ENCODE measurements at regions of chr11 and their contacts with region 1.

Region 1: GRCh38 chr11:11848891-11849746 is 7.3 kb downstream of the USP47 start:
- DNase-seq: peak; percentile 67
- ATAC-seq: peak; percentile 82

Region 2: DNA sequence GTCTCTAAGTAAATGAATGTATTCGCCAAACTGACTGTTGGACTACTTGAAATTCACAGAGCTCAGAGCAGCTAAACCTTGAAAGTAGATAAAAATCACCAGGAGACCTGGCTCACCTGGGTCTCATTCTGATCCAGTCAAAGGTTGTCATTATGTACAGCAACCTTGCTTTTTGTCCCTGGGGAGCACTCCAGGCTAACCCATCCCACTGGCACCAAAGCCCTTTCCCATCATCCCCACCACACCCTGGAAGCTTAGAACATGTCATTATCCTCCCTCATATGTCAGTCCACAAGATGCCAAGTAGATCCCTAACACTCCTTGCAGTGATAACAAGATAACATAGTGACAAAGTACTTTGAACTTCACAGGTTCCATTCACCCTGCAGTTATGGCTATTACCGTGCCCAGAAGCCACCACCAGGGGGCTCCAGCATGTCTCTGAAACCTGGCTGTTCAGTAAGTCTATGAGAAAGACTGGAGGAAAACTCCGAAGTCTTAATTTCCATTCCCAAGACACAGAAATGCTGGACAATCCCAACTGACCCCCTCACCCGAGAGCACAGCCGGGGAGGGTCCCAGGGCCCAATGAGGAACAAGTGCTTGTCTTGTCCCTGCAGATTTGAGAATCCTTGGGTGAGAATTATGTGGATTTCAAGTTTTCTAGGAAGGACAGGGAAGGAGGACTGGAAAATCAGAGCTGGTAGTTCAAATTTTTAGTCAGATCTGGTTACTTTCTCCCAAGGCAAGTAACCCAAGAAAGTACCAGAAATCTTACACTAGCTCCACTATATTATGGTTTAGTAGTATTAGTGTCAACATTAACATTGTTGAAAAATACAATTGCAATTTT is 50.3 kb before region 1 on chr11:
- intact Hi-C with region 1: loop called (anchors 2 kb)
- DNase-seq: peak; percentile 88
- ATAC-seq: peak; percentile 84